Breast epithelium (tissue), 4 donors: ENCODE measurements at regions of chr12 and their contacts with region 1.

Region 1: DNA sequence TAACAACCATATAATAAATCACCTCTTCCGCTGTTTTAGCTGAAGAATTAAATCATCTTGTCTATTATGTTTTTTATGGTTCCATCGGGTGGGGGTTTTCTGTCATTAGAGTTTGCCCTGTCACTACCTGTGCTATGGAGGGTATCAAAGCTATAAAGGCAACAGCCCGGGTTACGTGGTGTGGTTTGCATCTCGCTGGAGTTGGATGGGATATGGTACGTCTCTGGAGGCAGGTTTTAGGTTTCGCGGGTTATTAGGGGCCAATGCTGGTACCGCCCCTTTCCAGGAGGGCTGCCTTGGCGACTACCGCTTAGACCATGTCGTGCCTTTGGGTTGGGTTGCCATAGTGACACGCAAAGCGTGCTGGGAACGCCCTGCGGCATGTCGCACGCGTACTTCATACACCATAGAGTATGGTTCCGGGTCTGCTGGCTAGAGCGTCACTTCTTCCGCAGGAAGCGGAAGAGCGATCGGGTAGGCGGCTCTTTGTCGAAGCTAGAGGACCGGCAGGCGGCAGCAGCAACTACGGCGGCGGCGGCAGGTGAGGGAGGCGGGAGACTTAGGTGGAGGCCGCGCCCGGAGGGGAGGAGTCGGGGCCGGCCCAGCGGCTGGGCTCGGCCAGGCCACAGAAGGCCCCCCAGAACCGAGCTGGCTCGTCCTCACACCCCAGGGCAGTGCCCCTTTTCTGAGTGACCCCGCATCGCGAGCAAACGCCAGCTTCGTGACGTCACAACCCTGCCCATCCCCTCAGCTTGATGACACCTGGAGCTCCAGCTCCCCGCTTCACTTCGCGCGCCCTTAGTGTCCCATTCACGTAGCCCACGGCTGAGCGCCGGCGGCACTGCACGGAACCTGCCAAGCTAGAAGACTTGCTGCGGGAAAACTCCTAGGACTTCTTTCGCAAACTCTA is at the start of gene ZC3H10:
- DNase-seq: peak; percentile 99
- H3K4me3 ChIP-seq: peak within 1 kb of the TSS; percentile 75 to 81 (median 80)
- H3K27ac ChIP-seq: peak within 1 kb of the TSS; percentile 96 to 98
- H3K4me1 ChIP-seq: peaks cover 5 to 8% of the 10 kb centered on the region in 2 donors
- H3K27me3 ChIP-seq: no peaks in the 10 kb centered on the region
- CTCF ChIP-seq: peak; percentile 48 to 62 (median 55)
- POLR2A ChIP-seq: peak; percentile 86
- total RNA-seq, gene ZC3H10: 3.6 to 4.8 (median 4.7) TPM

Region 2: GRCh38 chr12:54734196-54734950 is 1383.7 kb before region 1 on chr12:
- intact Hi-C with region 1: no loop called
- DNase-seq: no peak
- H3K4me3 ChIP-seq: no peak overlapping the region
- H3K27ac ChIP-seq: no peak overlapping the region
- H3K4me1 ChIP-seq: no peaks in the 10 kb centered on the region
- H3K27me3 ChIP-seq: no peaks in the 10 kb centered on the region
- CTCF ChIP-seq: no peak
- POLR2A ChIP-seq: no peak

Region 3: GRCh38 chr12:56158029-56158925 is 40.2 kb after region 1 on chr12 and contains the start of gene MYL6:
- intact Hi-C with region 1: loop called (anchors 5 kb)
- DNase-seq: peak; percentile 97 to 99
- H3K4me3 ChIP-seq: peak within 1 kb of the TSS; percentile 89 to 97 (median 94)
- H3K27ac ChIP-seq: peak within 1 kb of the TSS; percentile 100
- H3K4me1 ChIP-seq: peaks cover 4 to 30% of the 10 kb centered on the region in 2 donors
- H3K27me3 ChIP-seq: no peaks in the 10 kb centered on the region
- CTCF ChIP-seq: peak in 2 of 3 donors; percentile 7 to 8
- POLR2A ChIP-seq: peak; percentile 99
- total RNA-seq, gene MYL6: 1,725 to 2,481 (median 1,981) TPM

Region 4: GRCh38 chr12:56468216-56469006 is 350.4 kb after region 1 on chr12 and contains the start of gene SPRYD4:
- intact Hi-C with region 1: loop called (anchors 2 kb)
- DNase-seq: peak; percentile 92 to 93
- H3K4me3 ChIP-seq: peak within 1 kb of the TSS; percentile 78 to 84 (median 81)
- H3K27ac ChIP-seq: peak within 1 kb of the TSS; percentile 90 to 92
- H3K4me1 ChIP-seq: peaks cover 0 to 6% of the 10 kb centered on the region in 2 donors
- H3K27me3 ChIP-seq: no peaks in the 10 kb centered on the region
- CTCF ChIP-seq: peak in 2 of 3 donors; percentile 11 to 15
- POLR2A ChIP-seq: peak; percentile 96
- total RNA-seq, gene SPRYD4: 2.9 to 4.8 (median 3.6) TPM